Activated CD4-positive, alpha-beta T cell treated with anti-CD3 and anti-CD28 coated beads, Interleukin-2, amount 10 ng/mL, durations not matched to agents 24 days and 14 days (primary cell): ENCODE measurements at regions of chr5 and their contacts with region 1.

Region 1: DNA sequence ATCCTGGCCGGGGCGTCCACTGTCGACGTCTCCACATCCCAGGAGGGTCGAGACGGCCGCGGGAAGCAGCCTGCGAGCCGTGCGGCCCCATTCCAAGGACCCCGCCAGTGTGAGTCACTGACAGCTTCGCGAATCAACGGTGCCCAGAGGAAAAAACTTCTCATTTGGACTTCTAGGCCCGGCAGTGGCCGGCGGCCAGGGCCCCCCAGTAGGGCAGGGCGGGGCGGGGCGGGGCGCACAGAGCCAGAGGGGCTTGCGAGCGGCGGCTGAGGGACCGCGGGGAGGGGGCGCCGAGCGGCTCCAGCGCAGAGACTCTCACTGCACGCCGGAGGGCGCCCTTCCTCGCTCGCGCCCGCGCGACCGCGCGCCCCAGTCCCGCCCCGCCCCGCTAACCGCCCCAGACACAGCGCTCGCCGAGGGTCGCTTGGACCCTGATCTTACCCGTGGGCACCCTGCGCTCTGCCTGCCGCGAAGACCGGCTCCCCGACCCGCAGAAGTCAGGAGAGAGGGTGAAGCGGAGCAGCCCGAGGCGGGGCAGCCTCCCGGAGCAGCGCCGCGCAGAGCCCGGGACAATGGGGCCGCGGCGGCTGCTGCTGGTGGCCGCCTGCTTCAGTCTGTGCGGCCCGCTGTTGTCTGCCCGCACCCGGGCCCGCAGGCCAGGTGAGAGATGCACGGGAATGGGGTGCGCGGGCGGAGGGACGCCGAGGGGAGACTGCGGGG is at the start of gene F2R:
- DNase-seq: peak; percentile 86
- H3K4me3 Mint-ChIP-seq: peak within 1 kb of the TSS; percentile 88
- H3K27ac Mint-ChIP-seq: peak within 1 kb of the TSS; percentile 67
- H3K4me1 Mint-ChIP-seq: peaks cover 25% of the 10 kb centered on the region
- H3K27me3 Mint-ChIP-seq: peaks cover 26% of the 10 kb centered on the region
- total RNA-seq, gene F2R: 2.3 and 2.9 TPM in 2 replicates

Region 2: GRCh38 chr5:76601470-76601869 is 114.4 kb before region 1 on chr5:
- intact Hi-C with region 1: loop called (anchors 10 kb)
- DNase-seq: peak; percentile 79
- H3K4me3 Mint-ChIP-seq: no peak overlapping the region
- H3K27ac Mint-ChIP-seq: no peak overlapping the region
- H3K4me1 Mint-ChIP-seq: peaks cover 9% of the 10 kb centered on the region
- H3K27me3 Mint-ChIP-seq: no peaks in the 10 kb centered on the region

Region 3: DNA sequence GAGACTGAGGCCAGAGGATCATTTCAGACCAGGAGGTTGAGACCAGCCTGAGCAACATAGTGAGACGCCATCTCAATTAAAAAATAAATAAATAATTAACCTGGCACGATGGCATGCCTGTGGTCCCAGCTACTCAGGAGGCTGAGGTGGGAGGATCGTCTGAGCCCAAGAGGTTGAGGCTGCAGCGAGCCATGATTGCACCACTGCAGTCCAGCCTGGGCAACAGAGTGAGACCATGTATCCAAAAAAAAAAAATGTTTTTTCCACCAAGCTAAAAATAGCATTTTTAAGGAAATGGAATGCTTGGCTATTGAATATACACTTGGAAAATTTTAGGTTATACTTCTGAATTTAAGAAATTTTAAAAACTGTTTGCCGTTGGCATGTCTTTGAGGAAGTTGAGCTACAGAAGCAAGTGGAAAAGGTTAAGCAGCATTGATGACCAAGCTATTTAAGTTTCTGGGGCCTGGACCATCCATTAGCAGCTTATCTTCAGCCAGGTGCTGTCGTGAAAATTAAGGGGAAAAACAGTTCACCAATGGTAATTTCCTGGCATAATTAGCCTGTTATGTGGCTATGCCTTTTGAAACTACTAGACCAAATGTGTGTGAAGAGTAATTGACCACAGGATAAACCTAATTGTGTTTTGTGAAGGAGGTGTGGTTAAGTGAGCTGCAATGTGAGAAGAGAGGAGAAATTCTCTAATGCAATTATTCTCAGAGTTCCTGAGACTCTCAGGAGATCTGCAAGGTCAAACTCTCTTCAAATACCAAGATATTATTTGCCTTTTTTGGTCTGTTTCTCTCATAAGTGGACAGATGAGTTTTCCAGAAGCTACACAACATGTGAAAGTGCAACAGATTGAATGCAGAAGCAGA is 21.0 kb after region 1 on chr5:
- intact Hi-C with region 1: loop called (anchors 1 kb)
- DNase-seq: no peak
- H3K4me3 Mint-ChIP-seq: peak overlapping the region; percentile 17
- H3K27ac Mint-ChIP-seq: peak overlapping the region; percentile 46
- H3K4me1 Mint-ChIP-seq: peaks cover 29% of the 10 kb centered on the region
- H3K27me3 Mint-ChIP-seq: no peaks in the 10 kb centered on the region